Naive thymus-derived CD4-positive, alpha-beta T cell (primary cell): ENCODE measurements at regions of chr14 and their contacts with region 1.

Region 1: DNA sequence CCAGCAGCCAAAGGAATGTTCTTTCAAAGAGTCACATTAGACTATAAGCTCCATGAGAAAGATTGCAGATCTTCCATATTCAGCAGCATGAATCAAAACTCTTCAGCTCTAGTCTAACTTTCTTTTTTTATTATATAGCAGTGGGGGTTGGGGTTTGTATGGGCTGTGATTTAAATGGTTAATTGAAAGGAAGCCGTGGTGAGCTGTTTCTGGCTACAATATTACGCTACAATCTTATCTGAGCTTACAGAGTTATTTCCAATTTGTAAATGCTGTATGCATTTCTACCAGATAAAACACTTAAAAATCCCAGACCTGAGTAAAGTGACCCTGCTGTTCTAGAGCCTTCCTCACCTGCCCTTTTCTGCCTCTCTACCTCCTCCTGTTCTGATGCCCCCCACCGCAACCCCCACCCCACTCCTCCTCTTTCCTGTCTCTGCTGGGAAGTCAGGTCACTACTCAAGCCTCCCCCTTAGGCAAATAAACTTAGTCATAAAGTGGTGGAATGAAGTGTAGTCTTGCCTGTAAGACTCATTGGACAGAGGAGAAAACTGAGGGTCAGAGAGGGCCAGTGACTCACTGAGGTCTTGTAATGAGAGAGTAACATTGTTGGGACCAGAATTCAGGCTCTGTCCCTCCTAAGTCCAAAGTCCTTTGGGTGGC is 1089.5 kb downstream of the BCL11B start:
- DNase-seq: peak in 3 of 9 donors; percentile 44 to 58 (median 54)
- ATAC-seq: peak; percentile 28
- H3K4me3 ChIP-seq: peak overlapping the region; percentile 0
- H3K4me3 Mint-ChIP-seq: peak overlapping the region; percentile 46 to 84 (median 68)
- H3K27ac ChIP-seq: peak overlapping the region; percentile 80
- H3K27ac Mint-ChIP-seq: peak overlapping the region; percentile 89 to 100 (median 97)
- H3K4me1 ChIP-seq: peaks cover 75 to 94% of the 10 kb centered on the region in 2 donors
- H3K4me1 Mint-ChIP-seq: peaks cover 52 to 99% (median 95%) of the 10 kb centered on the region in 7 donors
- H3K27me3 ChIP-seq: no peaks in the 10 kb centered on the region
- H3K27me3 Mint-ChIP-seq: no peaks in the 10 kb centered on the region

Region 2: DNA sequence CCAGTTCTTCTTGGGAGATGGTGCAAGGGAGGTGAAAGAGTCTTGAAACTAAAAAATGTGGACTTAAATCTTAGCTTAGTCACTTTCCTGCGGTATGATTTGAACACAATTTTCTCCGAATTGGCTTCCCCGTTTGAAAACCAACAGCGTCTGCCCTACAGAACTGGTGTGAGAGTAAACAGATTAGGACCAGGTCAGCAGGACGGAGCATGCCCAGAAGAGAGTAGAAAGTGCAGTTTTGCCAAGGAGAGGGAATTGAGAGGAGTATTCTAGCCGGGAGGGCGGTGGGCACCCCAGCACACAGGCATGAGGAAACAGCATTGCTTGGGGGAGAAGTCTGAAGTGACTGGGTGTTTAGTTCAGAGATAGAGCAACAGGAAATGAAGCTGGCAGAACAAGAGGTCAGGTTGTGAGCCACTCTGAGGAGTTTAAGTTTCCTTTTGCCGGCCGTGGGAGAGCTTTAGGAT is 458.2 kb before region 1 on chr14:
- CTCF ChIA-PET with region 1: no interaction called
- POLR2A ChIA-PET with region 1: interaction called, 6 read pairs
- intact Hi-C with region 1: loop called in 1 of 2 experiments (anchors 10 kb)
- DNase-seq: peak in 8 of 9 donors; percentile 38 to 67 (median 59)
- ATAC-seq: peak; percentile 77
- H3K4me3 ChIP-seq: peak overlapping the region; percentile 57
- H3K4me3 Mint-ChIP-seq: peak overlapping the region; percentile 78 to 92 (median 84)
- H3K27ac ChIP-seq: peak overlapping the region; percentile 80
- H3K27ac Mint-ChIP-seq: peak overlapping the region; percentile 92 to 99 (median 97)
- H3K4me1 ChIP-seq: peaks cover 28 to 72% of the 10 kb centered on the region in 2 donors
- H3K4me1 Mint-ChIP-seq: peaks cover 51 to 94% (median 86%) of the 10 kb centered on the region in 7 donors
- H3K27me3 ChIP-seq: no peaks in the 10 kb centered on the region
- H3K27me3 Mint-ChIP-seq: no peaks in the 10 kb centered on the region